HEK293 (cell line): ENCODE measurements at regions of chr11 and their contacts with region 1.

Region 1: GRCh38 chr11:117226388-117227385 is 5.2 kb downstream of the PCSK7 start:
- H3K4me3 ChIP-seq: no peak overlapping the region
- H3K27ac ChIP-seq: no peak overlapping the region
- H3K4me1 ChIP-seq: peaks cover 3% of the 10 kb centered on the region; the same call in 1 of the 2 replicates
- CTCF ChIP-seq: no peak

Region 2: GRCh38 chr11:116742104-116742503 is 484.6 kb before region 1 on chr11:
- CTCF ChIA-PET with region 1: interaction called, 10 read pairs
- POLR2A ChIA-PET with region 1: no interaction called
- H3K4me3 ChIP-seq: no peak overlapping the region
- H3K27ac ChIP-seq: no peak overlapping the region
- H3K4me1 ChIP-seq: no peaks in the 10 kb centered on the region
- CTCF ChIP-seq: no peak

Region 3: GRCh38 chr11:117197516-117198456 is 28.9 kb before region 1 on chr11:
- CTCF ChIA-PET with region 1: interaction called, 10 read pairs
- POLR2A ChIA-PET with region 1: interaction called, 3 read pairs
- H3K4me3 ChIP-seq: no peak overlapping the region
- H3K27ac ChIP-seq: no peak overlapping the region
- H3K4me1 ChIP-seq: no peaks in the 10 kb centered on the region
- CTCF ChIP-seq: no peak